Left cardiac atrium (tissue), 4 donors: ENCODE measurements at regions of chr7 and their contacts with region 1.

Region 1: DNA sequence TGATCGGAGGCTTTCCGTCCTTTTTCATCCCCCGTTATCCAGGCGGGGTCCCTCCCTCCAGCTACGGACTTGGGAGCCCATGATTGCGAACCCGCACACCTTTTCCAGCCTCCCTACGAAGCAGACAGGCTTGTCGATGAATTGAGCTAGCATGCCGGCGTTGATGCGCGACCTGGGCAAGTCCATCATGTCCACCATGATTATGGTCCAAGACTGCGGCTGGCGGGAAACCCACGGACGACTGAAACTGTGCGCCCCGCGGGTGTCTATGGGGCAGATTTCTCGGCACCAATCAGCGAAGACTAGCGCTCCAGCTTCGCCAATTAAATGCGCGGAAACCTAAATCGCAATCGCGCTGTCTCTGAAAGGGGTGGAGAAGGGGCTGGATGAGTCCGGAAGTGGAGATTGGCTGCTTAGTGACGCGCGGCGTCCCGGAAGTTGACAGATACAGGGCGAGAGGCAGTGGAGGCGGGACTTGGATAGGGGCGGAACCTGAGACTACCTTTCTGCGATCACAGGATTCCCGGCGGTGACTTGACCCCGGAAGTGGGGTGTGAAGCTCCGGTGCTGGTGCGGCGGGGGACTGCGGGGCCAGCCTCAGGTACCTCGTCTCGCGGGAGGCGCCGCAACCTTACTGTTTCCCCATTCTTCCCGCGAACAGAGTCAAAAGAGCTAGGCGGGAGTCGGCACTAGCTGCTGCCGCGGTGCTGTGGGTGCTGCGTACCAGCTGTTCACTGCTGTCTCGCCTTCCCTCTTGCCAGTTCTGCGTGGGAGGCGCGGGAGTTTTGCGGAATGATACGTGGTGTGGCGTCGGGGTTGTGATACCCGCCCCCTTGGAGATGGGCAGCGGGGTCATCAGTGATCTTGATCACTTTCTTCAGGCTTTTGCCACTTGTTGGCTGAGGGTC is at the start of gene UMAD1:
- DNase-seq: peak; percentile 99
- ATAC-seq: peak; percentile 99 to 100
- total RNA-seq, gene UMAD1: 9.8 to 11.1 TPM

Region 2: DNA sequence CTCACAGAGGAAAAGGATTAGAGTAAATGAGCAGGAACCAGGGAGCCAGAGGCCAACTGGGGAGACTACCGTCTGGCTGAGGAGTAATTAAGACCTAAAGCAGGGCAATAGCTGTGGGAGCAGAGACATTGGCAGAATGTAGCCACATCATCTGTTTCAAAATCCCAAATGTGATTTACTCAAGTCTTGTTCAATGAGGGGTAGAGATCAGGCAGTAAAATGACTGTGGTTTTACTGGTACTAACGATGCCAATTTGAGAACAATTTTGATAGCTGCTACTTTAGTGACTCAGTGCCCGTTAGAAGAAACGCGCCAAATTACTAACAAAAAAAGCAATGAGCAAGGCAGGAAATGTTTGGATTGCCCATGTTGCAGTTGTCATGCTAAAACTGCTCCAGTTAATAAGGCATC is 86.4 kb before region 1 on chr7:
- intact Hi-C with region 1: no loop called
- DNase-seq: no peak
- ATAC-seq: no peak

Region 3: GRCh38 chr7:7566651-7567611 is 73.5 kb before region 1 on chr7 and contains the start of gene MIOS:
- intact Hi-C with region 1: loop called in 1 of 2 experiments (anchors 5 kb)
- DNase-seq: peak; percentile 92
- ATAC-seq: peak; percentile 96 to 98
- total RNA-seq, gene MIOS: 19.7 to 21.7 TPM

Region 4: DNA sequence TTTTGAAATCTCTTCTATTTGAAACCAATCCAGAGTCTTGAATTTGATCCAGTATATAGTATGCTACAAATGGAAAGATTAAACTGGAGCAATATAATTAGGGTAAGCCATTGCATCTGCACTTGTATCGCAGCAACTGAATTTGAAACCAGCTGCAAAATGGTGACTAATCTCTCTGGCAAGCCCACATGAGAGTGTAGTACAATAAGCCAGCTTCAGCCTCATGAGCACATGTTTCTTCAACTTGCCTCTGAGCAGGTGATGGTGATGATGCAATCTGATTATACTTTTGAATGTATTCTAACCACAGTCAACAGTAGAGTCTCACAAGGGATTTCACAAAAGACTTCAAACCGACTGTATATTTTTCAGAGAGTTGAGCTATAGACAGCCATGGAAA is 78.8 kb after region 1 on chr7:
- intact Hi-C with region 1: no loop called
- DNase-seq: no peak
- ATAC-seq: peak in 1 of 2 donors; percentile 90

Region 5: GRCh38 chr7:7895754-7896153 is 255.3 kb after region 1 on chr7:
- intact Hi-C with region 1: no loop called
- DNase-seq: no peak
- ATAC-seq: no peak